Astrocyte of the cerebellum (primary cell): ENCODE measurements at regions of chr7 and their contacts with region 1.

Region 1: DNA sequence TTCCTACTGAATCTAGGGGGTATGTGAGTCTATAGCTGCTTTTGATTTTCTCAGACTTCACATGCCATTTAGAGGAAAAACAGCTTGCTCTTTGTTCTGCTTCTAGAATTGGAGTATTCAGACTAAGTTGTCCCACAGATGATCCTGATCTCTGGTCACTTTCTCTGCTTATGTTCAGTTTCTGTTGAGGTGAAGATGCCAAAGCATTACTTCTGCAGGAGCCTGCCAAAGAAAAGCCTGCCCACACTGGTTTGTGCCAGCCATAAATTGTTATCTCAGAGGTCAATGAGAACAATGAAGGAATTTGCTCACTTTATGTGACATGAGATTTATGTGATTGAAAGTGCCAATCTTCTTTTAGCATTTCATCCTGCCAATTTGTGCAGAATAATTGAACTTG is 163.6 kb downstream of the CDK14 start:
- DNase-seq: no peak
- H3K4me3 ChIP-seq: no peak overlapping the region
- CTCF ChIP-seq: no peak

Region 2: DNA sequence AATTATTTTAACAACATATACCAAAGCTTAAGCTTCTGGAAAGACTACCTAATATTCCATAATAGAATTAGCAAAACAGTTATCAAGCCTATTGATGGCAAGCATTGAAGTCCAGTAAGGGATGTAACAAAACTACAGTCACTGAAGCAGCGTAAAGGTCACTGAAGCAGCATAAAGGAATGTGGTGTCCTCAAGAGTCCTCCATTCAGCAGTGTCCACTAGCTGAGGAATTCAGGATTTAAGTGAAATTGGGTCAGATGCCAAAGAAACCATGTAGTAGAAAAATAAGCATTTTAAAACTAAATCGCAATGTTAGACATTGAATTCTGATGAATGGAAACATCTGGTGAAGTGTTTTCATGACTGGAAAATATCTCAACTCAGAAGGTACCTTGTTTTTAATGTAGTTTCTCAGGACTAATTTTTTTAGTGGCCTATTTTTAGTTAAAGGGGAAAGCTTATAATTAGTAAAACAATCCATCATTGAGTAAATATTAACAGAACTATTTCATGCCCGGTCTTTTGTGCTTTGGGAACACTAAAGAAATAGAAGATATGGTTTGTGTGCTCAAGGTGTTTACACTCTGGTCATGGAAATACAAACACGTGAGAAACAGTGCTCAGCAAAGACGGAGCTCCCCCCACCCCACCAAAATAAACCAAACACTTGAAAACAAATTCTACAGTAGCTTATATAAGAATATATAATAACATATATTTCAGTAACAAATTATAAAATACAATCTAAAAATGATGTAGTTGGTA is 42.2 kb before region 1 on chr7:
- in situ Hi-C with region 1: loop called (anchors 5 kb)
- DNase-seq: no peak
- H3K4me3 ChIP-seq: no peak overlapping the region
- CTCF ChIP-seq: no peak